ENCODE measurements at regions of chr7 and their contacts with region 1.

Region 1: GRCh38 chr7:114930829-114931655 is 9.1 kb downstream of the MDFIC start:
- DNase-seq: no peak
- H3K4me3 Mint-ChIP-seq: peak overlapping the region; percentile 67
- H3K27ac Mint-ChIP-seq: no peak overlapping the region
- H3K4me1 Mint-ChIP-seq: peaks cover 38% of the 10 kb centered on the region
- H3K27me3 Mint-ChIP-seq: no peaks in the 10 kb centered on the region

Region 2: DNA sequence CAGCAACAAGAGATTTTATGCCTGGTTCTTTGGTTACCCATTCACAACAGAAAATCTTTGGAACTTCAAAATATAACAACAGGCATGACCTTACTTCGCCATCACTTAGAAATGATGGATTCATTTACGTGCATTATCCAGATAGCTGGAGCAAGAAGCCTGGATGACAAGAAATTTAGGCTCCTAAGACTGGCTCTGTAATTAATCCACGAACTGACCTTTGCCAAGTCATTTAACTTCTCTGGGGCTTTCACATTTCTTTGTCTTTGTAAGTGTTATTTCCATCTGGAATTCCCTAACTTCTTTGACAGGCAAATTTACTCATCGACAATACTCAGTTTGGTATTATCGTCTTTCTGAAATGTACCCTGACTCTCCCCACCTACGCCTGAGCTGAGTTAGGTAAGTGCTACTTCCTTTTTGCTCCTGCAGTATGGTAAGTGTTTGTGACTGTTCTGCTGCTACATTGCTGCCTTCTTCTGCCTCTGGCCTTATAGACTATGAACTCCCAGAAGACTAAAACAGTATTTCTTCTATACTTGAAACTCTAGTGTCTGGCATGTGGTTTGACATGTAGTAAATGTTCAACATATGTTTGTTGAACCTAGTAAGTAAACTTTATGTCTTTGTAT is 14.7 kb before region 1 on chr7:
- CTCF ChIA-PET with region 1: interaction called, 4 read pairs
- POLR2A ChIA-PET with region 1: interaction called, 32 read pairs
- intact Hi-C with region 1: loop called (anchors 1 kb)
- DNase-seq: peak; percentile 69
- H3K4me3 Mint-ChIP-seq: peak overlapping the region; percentile 38
- H3K27ac Mint-ChIP-seq: peak overlapping the region; percentile 90
- H3K4me1 Mint-ChIP-seq: peaks cover 57% of the 10 kb centered on the region
- H3K27me3 Mint-ChIP-seq: no peaks in the 10 kb centered on the region

Region 3: GRCh38 chr7:114959931-114960330 is 28.9 kb after region 1 on chr7:
- CTCF ChIA-PET with region 1: no interaction called
- POLR2A ChIA-PET with region 1: no interaction called
- intact Hi-C with region 1: loop called (anchors 2 kb)
- DNase-seq: no peak
- H3K4me3 Mint-ChIP-seq: no peak overlapping the region
- H3K27ac Mint-ChIP-seq: no peak overlapping the region
- H3K4me1 Mint-ChIP-seq: peaks cover 65% of the 10 kb centered on the region
- H3K27me3 Mint-ChIP-seq: no peaks in the 10 kb centered on the region

Region 4: GRCh38 chr7:115008465-115009114 is 77.5 kb after region 1 on chr7:
- CTCF ChIA-PET with region 1: interaction called, 3 read pairs
- POLR2A ChIA-PET with region 1: interaction called, 3 read pairs
- intact Hi-C with region 1: loop called (anchors 1 kb)
- DNase-seq: peak; percentile 28
- H3K4me3 Mint-ChIP-seq: peak overlapping the region; percentile 58
- H3K27ac Mint-ChIP-seq: peak overlapping the region; percentile 88
- H3K4me1 Mint-ChIP-seq: peaks cover 76% of the 10 kb centered on the region
- H3K27me3 Mint-ChIP-seq: no peaks in the 10 kb centered on the region

Region 5: GRCh38 chr7:115145512-115145911 is 214.5 kb after region 1 on chr7:
- CTCF ChIA-PET with region 1: no interaction called
- POLR2A ChIA-PET with region 1: no interaction called
- intact Hi-C with region 1: loop called (anchors 5 kb)
- DNase-seq: no peak
- H3K4me3 Mint-ChIP-seq: no peak overlapping the region
- H3K27ac Mint-ChIP-seq: no peak overlapping the region
- H3K4me1 Mint-ChIP-seq: peaks cover 10% of the 10 kb centered on the region
- H3K27me3 Mint-ChIP-seq: no peaks in the 10 kb centered on the region

Measured in activated CD4-positive, alpha-beta memory T cell treated with anti-CD3 and anti-CD28 coated beads for 36 hours (primary cell).